ENCODE measurements at regions of chr11 and their contacts with region 1.

Region 1: GRCh38 chr11:14454861-14455632 is 44.6 kb downstream of the COPB1 start:
- DNase-seq: no peak
- H3K4me3 ChIP-seq: no peak overlapping the region
- CTCF ChIP-seq: peak; percentile 35

Region 2: GRCh38 chr11:13983081-13983751 is 471.8 kb before region 1 on chr11:
- CTCF ChIA-PET with region 1: no interaction called
- POLR2A ChIA-PET with region 1: no interaction called
- DNase-seq: no peak
- H3K4me3 ChIP-seq: no peak overlapping the region
- CTCF ChIP-seq: no peak

Region 3: GRCh38 chr11:14119357-14119756 is 335.7 kb before region 1 on chr11:
- CTCF ChIA-PET with region 1: no interaction called
- POLR2A ChIA-PET with region 1: no interaction called
- DNase-seq: no peak
- H3K4me3 ChIP-seq: no peak overlapping the region
- CTCF ChIP-seq: no peak

Region 4: DNA sequence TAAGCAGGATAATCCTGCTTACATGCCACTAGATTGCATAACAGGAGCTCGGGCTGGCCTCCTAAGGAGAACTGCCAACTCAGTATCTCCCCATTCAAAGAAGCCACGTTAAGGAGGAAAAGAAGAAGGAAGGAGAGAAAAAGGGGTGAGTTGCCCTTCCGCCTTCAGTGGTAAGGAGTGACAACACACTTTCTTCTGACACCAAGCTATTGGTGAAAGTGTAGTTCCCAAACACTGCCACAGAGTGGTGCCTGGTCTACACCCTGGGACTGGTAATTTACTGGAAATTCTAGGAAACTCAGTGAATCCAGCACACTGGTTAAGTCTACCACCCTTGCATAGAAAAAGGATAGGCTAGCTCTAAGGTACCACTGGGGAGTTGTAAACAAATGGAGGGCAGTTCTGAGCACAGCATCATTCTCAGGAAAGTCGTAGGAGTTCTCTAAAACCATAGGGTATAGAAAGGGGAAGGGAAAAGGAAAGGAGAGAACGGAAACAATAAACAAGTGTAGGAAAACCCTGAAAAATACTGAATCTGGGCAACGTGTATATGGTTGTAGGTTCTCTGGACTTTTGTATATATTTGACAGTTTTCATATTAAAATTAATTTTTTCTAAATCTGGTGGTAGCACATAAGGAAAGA is 154.3 kb before region 1 on chr11:
- CTCF ChIA-PET with region 1: interaction called, 469 read pairs
- POLR2A ChIA-PET with region 1: interaction called, 13 read pairs
- DNase-seq: no peak
- H3K4me3 ChIP-seq: no peak overlapping the region
- CTCF ChIP-seq: peak; percentile 74

Region 5: DNA sequence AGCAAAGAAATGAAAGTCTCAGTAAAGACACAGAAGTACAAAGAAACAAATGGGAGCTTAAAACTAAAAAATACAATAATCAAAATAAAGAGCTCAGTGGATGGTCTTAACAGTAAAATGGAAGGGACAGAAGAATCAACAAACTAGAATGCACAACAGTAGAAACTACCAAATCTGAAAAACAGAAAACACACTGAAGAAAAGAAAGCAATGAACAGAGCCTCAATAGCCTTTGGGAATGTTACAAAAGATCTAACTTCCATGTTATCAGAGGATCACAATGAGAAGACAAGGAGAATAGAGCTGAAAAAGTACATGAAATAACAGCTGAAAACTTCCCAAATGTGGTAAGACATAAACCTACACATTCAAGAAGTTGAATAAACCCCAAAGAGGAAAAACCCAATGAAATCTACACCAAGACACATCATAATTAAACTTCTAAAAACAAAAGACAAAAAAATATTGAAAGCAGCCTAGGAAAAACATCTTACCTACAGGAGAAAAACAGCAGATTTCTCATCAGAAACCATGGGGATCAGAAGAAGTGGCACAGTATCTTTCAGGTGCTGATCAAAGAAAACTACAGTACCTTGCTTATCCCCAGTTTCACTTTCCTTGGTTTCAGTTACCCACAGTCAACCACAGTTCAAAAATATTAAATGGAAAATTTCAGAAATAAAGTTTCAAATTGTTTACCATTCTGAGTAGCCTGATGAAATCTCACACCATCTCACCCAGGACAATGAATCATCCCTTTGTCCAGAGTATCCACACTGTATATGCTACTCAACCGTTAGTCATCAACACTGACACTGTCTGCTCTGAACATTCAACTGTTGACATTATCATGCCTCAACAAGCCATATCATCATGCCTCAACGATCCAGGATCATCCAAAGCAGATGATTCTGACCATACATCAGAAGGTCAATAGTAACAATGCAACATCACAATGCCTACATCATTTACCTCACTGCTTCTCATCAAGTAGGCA is 118.2 kb before region 1 on chr11:
- CTCF ChIA-PET with region 1: interaction called, 11 read pairs
- POLR2A ChIA-PET with region 1: interaction called, 5 read pairs
- DNase-seq: peak; percentile 77
- H3K4me3 ChIP-seq: no peak overlapping the region
- CTCF ChIP-seq: no peak

Region 6: GRCh38 chr11:14422052-14422813 is 32.8 kb before region 1 on chr11:
- CTCF ChIA-PET with region 1: interaction called, 31 read pairs
- POLR2A ChIA-PET with region 1: interaction called, 10 read pairs
- DNase-seq: peak; percentile 98
- H3K4me3 ChIP-seq: no peak overlapping the region
- CTCF ChIP-seq: no peak

Region 7: GRCh38 chr11:14471127-14471526 is 16.1 kb after region 1 on chr11:
- CTCF ChIA-PET with region 1: interaction called, 56 read pairs
- POLR2A ChIA-PET with region 1: interaction called, 6 read pairs
- DNase-seq: no peak
- H3K4me3 ChIP-seq: no peak overlapping the region
- CTCF ChIP-seq: no peak

Measured in AG04449 (cell line).